CD8-positive, alpha-beta T cell (primary cell): ENCODE measurements at regions of chr6 and their contacts with region 1.

Region 1: DNA sequence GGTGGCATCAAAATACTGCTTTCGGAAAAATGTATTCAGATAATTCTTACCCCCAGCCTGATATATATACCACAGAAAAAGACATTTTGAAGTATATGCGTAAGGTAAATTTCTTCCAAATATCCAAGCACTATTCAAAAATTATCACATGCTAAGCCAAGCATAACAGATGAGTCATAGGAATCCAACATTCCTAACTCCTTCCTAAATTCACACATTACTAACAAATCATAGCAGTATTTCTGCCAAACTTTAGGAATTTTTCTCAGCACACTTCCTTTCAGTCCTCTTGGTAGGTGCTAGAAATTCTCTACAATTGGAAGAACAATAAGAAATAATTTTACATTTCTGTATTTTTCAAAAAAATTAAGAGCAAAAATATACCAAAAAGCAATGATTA is 417.5 kb downstream of the EYS start:
- DNase-seq: no peak
- ATAC-seq: no peak
- H3K4me3 ChIP-seq: no peak overlapping the region
- H3K4me3 Mint-ChIP-seq: no peak overlapping the region
- H3K27ac ChIP-seq: no peak overlapping the region
- H3K27ac Mint-ChIP-seq: no peak overlapping the region
- H3K4me1 ChIP-seq: no peaks in the 10 kb centered on the region
- H3K4me1 Mint-ChIP-seq: no peaks in the 10 kb centered on the region
- H3K27me3 ChIP-seq: no peaks in the 10 kb centered on the region
- H3K27me3 Mint-ChIP-seq: no peaks in the 10 kb centered on the region
- CTCF ChIP-seq: no peak

Region 2: DNA sequence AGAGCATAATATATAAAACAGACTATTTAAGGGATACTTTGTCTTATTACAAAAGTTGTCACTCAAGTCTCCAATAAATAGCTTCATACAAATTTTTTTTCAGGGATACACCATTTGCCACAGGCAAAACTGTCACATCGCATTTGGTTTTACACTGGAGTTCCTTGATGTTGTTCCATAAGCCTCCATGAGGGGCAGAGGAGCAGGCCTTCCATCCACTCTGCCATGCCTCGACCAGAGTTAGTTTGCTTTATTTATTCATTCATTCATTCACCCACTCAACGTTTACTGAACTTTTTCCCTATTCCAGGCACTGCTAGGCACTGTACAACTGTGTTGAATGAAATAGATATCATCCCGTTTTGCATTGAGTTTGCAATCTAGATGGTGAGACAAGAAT is 1407.3 kb before region 1 on chr6:
- CTCF ChIA-PET with region 1: no interaction called
- POLR2A ChIA-PET with region 1: no interaction called
- intact Hi-C with region 1: loop called in 1 of 2 experiments (anchors 10 kb)
- DNase-seq: no peak
- ATAC-seq: no peak
- H3K4me3 ChIP-seq: no peak overlapping the region
- H3K4me3 Mint-ChIP-seq: no peak overlapping the region
- H3K27ac ChIP-seq: no peak overlapping the region
- H3K27ac Mint-ChIP-seq: no peak overlapping the region
- H3K4me1 ChIP-seq: no peaks in the 10 kb centered on the region
- H3K4me1 Mint-ChIP-seq: no peaks in the 10 kb centered on the region
- H3K27me3 ChIP-seq: no peaks in the 10 kb centered on the region
- H3K27me3 Mint-ChIP-seq: peaks cover 2% of the 10 kb centered on the region
- CTCF ChIP-seq: no peak

Region 3: DNA sequence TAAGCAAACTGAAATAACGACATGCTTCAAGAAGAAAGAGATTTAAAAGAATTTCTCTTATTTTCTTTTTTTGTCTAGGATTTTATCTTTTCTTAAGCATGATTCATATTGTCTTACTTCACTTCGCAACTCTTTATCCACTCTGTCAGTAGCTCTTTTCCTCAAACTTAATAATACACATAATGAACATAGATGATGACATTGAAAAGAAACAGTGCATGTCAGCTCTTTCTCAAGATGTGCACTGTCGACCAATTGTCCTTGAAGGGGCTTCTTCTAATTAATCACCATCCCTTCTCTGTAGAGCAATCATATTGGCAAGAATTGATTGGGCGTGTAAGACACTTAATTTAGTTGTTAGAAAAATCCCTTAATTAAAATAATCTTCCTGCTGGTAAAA is 61.0 kb after region 1 on chr6:
- CTCF ChIA-PET with region 1: no interaction called
- POLR2A ChIA-PET with region 1: no interaction called
- intact Hi-C with region 1: no loop called
- DNase-seq: no peak
- ATAC-seq: no peak
- H3K4me3 ChIP-seq: no peak overlapping the region
- H3K4me3 Mint-ChIP-seq: no peak overlapping the region
- H3K27ac ChIP-seq: no peak overlapping the region
- H3K27ac Mint-ChIP-seq: no peak overlapping the region
- H3K4me1 ChIP-seq: no peaks in the 10 kb centered on the region
- H3K4me1 Mint-ChIP-seq: no peaks in the 10 kb centered on the region
- H3K27me3 ChIP-seq: no peaks in the 10 kb centered on the region
- H3K27me3 Mint-ChIP-seq: no peaks in the 10 kb centered on the region
- CTCF ChIP-seq: no peak